ENCODE measurements at regions of chr2 and their contacts with region 1.

Region 1: DNA sequence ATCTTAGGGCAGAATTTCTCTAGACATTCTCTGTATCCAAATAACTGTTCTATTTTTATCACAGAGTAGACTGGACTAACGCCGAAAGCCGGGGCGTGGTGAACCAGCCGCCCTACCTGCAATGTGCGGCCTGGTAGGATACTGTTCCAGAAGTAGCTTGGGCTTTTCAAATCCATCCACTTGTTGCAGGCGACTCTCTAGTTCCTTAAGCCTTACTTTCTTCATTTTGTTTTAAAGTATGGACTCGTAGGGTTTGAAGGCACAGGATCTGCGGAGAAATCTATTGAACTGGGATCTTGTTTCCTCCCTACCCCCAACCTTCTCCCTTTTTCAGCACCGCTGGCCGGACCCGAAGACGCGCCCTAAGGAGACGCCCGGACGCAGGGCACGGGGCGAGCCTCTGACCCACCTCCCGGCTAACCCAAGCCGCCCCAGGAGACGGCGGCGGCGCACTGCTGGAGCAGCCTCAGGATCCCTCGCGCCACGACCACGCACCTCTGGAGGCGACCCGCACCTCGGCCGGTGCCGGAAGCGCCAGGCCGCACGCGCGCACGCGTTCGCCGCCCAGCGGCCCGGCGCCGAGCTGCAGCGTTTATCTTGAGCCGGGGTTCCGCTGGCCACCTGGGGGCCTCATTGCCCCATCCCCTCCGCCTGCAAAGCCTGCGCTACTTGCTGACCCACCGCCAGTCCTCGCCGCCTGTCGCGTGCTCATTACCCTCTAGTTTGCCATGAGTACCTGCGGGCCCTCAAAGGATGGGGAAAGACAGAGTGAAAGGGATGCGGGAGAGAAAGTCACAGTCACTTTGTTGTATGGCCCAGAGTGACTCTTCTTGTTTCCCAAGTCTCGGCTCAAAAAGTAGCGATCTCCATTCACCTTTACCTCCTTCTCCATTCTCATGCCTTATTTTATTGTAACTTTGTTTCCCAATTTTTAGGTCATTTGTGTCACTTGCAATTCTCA is at the start of gene METTL5:
- DNase-seq: peak; percentile 79 to 85
- ATAC-seq: peak; percentile 57 to 77 (median 72)
- H3K4me3 ChIP-seq: peak within 1 kb of the TSS; percentile 56 to 92 (median 73)
- H3K27ac ChIP-seq: peak within 1 kb of the TSS; percentile 27 to 92 (median 84)
- H3K4me1 ChIP-seq: peaks cover 5 to 58% (median 45%) of the 10 kb centered on the region in 9 donors
- H3K27me3 ChIP-seq: no peaks in the 10 kb centered on the region
- CTCF ChIP-seq: peak in 8 of 9 donors; percentile 89 to 100 (median 98)
- total RNA-seq, gene METTL5: 55.7 to 85.5 (median 68.0) TPM

Region 2: DNA sequence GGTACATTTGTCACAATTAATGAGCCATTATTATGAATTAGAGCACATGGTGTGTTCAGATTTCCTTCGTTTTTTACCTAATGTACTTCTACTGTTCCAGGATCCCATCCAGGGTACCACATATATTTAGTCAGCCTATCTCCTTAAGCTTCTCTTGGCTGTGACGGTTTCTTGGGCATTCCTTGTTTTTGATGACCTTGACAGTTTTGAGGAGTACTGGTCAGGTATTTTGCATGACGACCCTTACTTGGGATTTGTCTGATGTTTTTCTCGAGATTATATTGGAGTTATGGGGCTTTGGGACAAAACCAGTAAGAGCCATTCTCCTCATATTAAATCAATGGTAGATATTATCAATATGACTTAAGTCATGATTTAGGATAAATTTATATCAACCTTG is 452.1 kb before region 1 on chr2:
- intact Hi-C with region 1: no loop called
- DNase-seq: no peak
- ATAC-seq: no peak
- H3K4me3 ChIP-seq: no peak overlapping the region
- H3K27ac ChIP-seq: no peak overlapping the region
- H3K4me1 ChIP-seq: no peaks in the 10 kb centered on the region
- H3K27me3 ChIP-seq: peaks cover 0 to 8% (median 3%) of the 10 kb centered on the region in 7 donors
- CTCF ChIP-seq: no peak

Region 3: GRCh38 chr2:169790581-169790980 is 34.1 kb before region 1 on chr2:
- intact Hi-C with region 1: no loop called
- DNase-seq: no peak
- ATAC-seq: no peak
- H3K4me3 ChIP-seq: no peak overlapping the region
- H3K27ac ChIP-seq: no peak overlapping the region
- H3K4me1 ChIP-seq: peaks cover 0 to 7% (median 0%) of the 10 kb centered on the region in 9 donors
- H3K27me3 ChIP-seq: peaks cover 0 to 16% (median 0%) of the 10 kb centered on the region in 7 donors
- CTCF ChIP-seq: no peak

Region 4: DNA sequence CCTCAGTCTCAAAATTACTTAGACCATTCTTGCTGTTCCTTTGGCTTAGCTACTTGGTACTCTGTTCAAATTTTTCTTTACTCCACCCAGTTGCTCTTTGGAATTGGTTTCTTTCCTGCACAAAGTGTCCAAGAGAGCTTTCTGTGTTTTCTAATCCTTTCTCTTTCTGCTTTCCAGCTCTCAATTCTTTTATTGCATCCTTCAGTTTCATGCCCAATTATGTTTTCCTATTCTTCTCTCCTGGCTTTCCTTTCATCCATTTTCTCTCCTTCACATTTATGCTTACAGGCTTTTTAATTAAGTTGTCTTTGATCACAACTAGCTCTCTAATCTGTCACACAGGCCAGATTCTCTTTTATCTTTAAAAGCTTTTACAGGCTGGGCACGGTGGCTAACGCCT is 40.8 kb after region 1 on chr2:
- intact Hi-C with region 1: loop called in 2 of 10 experiments (anchors 5 to 10 kb)
- DNase-seq: no peak
- ATAC-seq: no peak
- H3K4me3 ChIP-seq: no peak overlapping the region
- H3K27ac ChIP-seq: no peak overlapping the region
- H3K4me1 ChIP-seq: peaks cover 0 to 53% (median 31%) of the 10 kb centered on the region in 9 donors
- H3K27me3 ChIP-seq: no peaks in the 10 kb centered on the region
- CTCF ChIP-seq: no peak

Region 5: DNA sequence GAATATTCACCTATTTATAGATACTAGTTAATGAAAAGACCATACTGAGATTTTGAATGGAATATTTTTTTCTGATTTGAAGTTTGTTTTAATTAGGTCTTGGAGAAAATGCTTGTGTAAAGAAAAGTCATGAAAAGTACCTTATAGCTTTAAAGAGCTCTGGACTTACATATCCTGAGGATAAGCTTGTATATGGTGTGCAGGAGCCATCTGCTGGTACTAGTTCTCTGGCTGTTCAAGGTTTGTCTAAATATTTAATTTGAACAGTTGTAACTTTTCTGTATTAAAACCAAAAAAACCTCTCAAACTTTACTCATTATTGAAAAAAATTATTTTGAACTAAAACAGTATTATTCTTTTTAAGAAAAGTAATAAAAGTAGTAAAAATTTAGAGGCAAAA is 52.7 kb after region 1 on chr2:
- intact Hi-C with region 1: loop called in 7 of 10 experiments (anchors 2 to 10 kb)
- DNase-seq: no peak
- ATAC-seq: peak in 4 of 8 donors; percentile 62 to 67 (median 66)
- H3K4me3 ChIP-seq: no peak overlapping the region
- H3K27ac ChIP-seq: no peak overlapping the region
- H3K4me1 ChIP-seq: no peaks in the 10 kb centered on the region
- H3K27me3 ChIP-seq: no peaks in the 10 kb centered on the region
- CTCF ChIP-seq: peak in 8 of 9 donors; percentile 11 to 63 (median 46)

Region 6: GRCh38 chr2:169887120-169887519 is 62.5 kb after region 1 on chr2:
- intact Hi-C with region 1: loop called in 1 of 10 experiments (anchors 5 kb)
- DNase-seq: no peak
- ATAC-seq: no peak
- H3K4me3 ChIP-seq: no peak overlapping the region
- H3K27ac ChIP-seq: peak overlapping the region in 2 of 10 donors; percentile 2 to 9
- H3K4me1 ChIP-seq: peaks cover 3 to 31% (median 16%) of the 10 kb centered on the region in 9 donors
- H3K27me3 ChIP-seq: no peaks in the 10 kb centered on the region
- CTCF ChIP-seq: no peak

Region 7: DNA sequence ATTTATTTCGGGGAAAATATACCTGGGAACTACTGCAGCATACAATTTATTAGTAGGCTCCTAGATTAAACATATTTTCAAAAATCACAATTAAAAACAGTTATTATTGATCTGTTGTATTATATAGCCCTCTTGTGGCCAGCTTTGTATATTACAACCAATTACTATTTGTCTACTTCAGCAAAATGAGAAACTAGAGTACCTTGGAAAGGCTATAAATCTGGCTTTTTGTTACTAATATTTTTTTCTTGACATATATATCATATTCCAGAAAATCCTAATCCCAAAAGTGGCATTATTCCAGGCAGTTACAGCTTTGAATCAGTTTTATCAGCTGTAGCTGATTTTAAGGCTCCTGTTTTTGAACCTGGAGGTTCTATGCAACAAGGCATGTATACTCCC is 103.8 kb after region 1 on chr2:
- intact Hi-C with region 1: loop called in 9 of 10 experiments (anchors 2 to 5 kb)
- DNase-seq: peak in 1 of 2 donors; percentile 8
- ATAC-seq: peak in 1 of 8 donors; percentile 38
- H3K4me3 ChIP-seq: no peak overlapping the region
- H3K27ac ChIP-seq: no peak overlapping the region
- H3K4me1 ChIP-seq: peaks cover 0 to 3% (median 0%) of the 10 kb centered on the region in 9 donors
- H3K27me3 ChIP-seq: no peaks in the 10 kb centered on the region
- CTCF ChIP-seq: peak; percentile 56 to 82 (median 72)

Region 8: GRCh38 chr2:170013802-170014551 is 189.3 kb after region 1 on chr2:
- intact Hi-C with region 1: loop called in 1 of 10 experiments (anchors 10 kb)
- DNase-seq: no peak
- ATAC-seq: peak in 4 of 8 donors; percentile 28 to 50 (median 42)
- H3K4me3 ChIP-seq: no peak overlapping the region
- H3K27ac ChIP-seq: peak overlapping the region in 2 of 10 donors; percentile 26 to 27
- H3K4me1 ChIP-seq: peaks cover 0 to 32% (median 15%) of the 10 kb centered on the region in 9 donors
- H3K27me3 ChIP-seq: no peaks in the 10 kb centered on the region
- CTCF ChIP-seq: no peak